Activated CD4-positive, alpha-beta T cell treated with anti-CD3 and anti-CD28 coated beads for 36 hours (primary cell): ENCODE measurements at regions of chr16 and their contacts with region 1.

Region 1: GRCh38 chr16:50065624-50066481 is at the start of gene HEATR3:
- DNase-seq: peak; percentile 97
- ATAC-seq: peak; percentile 86
- H3K4me3 Mint-ChIP-seq: peak within 1 kb of the TSS; percentile 87
- H3K27ac Mint-ChIP-seq: peak within 1 kb of the TSS; percentile 88
- H3K4me1 Mint-ChIP-seq: peaks cover 33% of the 10 kb centered on the region
- H3K27me3 Mint-ChIP-seq: no peaks in the 10 kb centered on the region
- total RNA-seq, gene HEATR3: 22.2 to 28.7 TPM

Region 2: GRCh38 chr16:50102051-50102746 is 36.3 kb after region 1 on chr16:
- CTCF ChIA-PET with region 1: interaction called, 3 read pairs
- POLR2A ChIA-PET with region 1: no interaction called
- intact Hi-C with region 1: loop called in 1 of 2 experiments (anchors 1 kb)
- DNase-seq: peak; percentile 49
- ATAC-seq: peak; percentile 100
- H3K4me3 Mint-ChIP-seq: no peak overlapping the region
- H3K27ac Mint-ChIP-seq: peak overlapping the region; percentile 70
- H3K4me1 Mint-ChIP-seq: peaks cover 7% of the 10 kb centered on the region
- H3K27me3 Mint-ChIP-seq: no peaks in the 10 kb centered on the region